ENCODE measurements at regions of chr11 and their contacts with region 1.

Region 1: GRCh38 chr11:113289431-113290187 is 24.8 kb upstream of the TTC12 start:
- DNase-seq: peak; percentile 83
- ATAC-seq: peak; percentile 98
- H3K4me3 Mint-ChIP-seq: no peak overlapping the region
- H3K27ac Mint-ChIP-seq: no peak overlapping the region
- H3K4me1 Mint-ChIP-seq: no peaks in the 10 kb centered on the region
- H3K27me3 Mint-ChIP-seq: peaks cover 7% of the 10 kb centered on the region

Region 2: GRCh38 chr11:112219476-112220232 is 1070.0 kb before region 1 on chr11:
- CTCF ChIA-PET with region 1: interaction called, 5 read pairs
- POLR2A ChIA-PET with region 1: no interaction called
- intact Hi-C with region 1: loop called in 1 of 2 experiments (anchors 2 kb)
- DNase-seq: peak; percentile 45
- ATAC-seq: peak; percentile 99
- H3K4me3 Mint-ChIP-seq: no peak overlapping the region
- H3K27ac Mint-ChIP-seq: no peak overlapping the region
- H3K4me1 Mint-ChIP-seq: no peaks in the 10 kb centered on the region
- H3K27me3 Mint-ChIP-seq: no peaks in the 10 kb centered on the region

Region 3: DNA sequence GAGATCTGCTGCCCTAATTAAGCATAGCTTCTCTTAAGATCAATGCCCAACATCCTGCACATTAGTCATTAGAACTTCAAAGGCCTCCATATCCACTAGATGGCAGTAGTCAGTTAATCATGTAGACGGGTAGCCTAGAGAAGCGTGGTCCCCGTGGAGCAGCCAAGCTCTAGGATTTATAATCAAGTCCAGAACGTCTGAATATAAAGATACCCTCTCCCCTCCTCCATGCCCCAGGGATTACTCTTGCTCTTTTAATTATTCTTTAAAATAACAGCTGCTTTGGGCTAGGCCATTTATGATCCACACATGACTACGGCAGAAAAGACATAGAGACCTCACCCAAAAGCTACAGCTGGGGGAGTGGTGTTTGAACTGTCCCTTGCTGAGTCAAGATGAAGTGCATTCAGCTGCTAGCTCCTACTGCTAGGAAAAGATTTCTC is 701.3 kb before region 1 on chr11:
- CTCF ChIA-PET with region 1: interaction called, 42 read pairs
- POLR2A ChIA-PET with region 1: interaction called, 6 read pairs
- intact Hi-C with region 1: loop called (anchors 1 kb)
- DNase-seq: peak; percentile 64
- ATAC-seq: peak; percentile 94
- H3K4me3 Mint-ChIP-seq: no peak overlapping the region
- H3K27ac Mint-ChIP-seq: no peak overlapping the region
- H3K4me1 Mint-ChIP-seq: peaks cover 1% of the 10 kb centered on the region
- H3K27me3 Mint-ChIP-seq: no peaks in the 10 kb centered on the region

Region 4: DNA sequence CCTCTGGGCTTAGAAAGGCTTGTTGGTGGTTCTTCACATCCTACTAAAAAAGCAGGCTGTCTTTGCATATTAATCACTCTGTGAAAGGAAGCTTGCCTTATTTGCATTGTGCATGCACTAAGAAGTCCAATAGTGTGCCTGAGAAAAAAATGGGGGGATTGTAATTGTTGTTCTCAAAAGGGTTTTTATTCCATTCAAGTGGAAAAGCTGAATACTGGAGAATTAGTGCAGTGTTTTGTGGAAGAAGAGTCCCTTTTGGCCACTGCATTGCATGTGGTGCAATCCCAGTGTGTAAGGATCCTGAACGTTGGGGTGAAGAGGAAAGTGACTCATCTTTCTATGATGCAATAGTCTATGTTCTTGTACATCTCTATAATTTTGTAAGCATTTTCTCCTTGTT is 311.9 kb before region 1 on chr11:
- CTCF ChIA-PET with region 1: no interaction called
- POLR2A ChIA-PET with region 1: no interaction called
- intact Hi-C with region 1: loop called in 1 of 2 experiments (anchors 5 kb)
- DNase-seq: no peak
- ATAC-seq: no peak
- H3K4me3 Mint-ChIP-seq: no peak overlapping the region
- H3K27ac Mint-ChIP-seq: no peak overlapping the region
- H3K4me1 Mint-ChIP-seq: no peaks in the 10 kb centered on the region
- H3K27me3 Mint-ChIP-seq: peaks cover 19% of the 10 kb centered on the region

Region 5: GRCh38 chr11:113305440-113306336 is 16.1 kb after region 1 on chr11:
- CTCF ChIA-PET with region 1: interaction called, 18 read pairs
- POLR2A ChIA-PET with region 1: no interaction called
- intact Hi-C with region 1: no loop called
- DNase-seq: peak; percentile 85
- ATAC-seq: peak; percentile 99
- H3K4me3 Mint-ChIP-seq: no peak overlapping the region
- H3K27ac Mint-ChIP-seq: no peak overlapping the region
- H3K4me1 Mint-ChIP-seq: peaks cover 3% of the 10 kb centered on the region
- H3K27me3 Mint-ChIP-seq: peaks cover 6% of the 10 kb centered on the region